HCT116 (cell line): ENCODE measurements at regions of chr1 and their contacts with region 1.

Region 1: DNA sequence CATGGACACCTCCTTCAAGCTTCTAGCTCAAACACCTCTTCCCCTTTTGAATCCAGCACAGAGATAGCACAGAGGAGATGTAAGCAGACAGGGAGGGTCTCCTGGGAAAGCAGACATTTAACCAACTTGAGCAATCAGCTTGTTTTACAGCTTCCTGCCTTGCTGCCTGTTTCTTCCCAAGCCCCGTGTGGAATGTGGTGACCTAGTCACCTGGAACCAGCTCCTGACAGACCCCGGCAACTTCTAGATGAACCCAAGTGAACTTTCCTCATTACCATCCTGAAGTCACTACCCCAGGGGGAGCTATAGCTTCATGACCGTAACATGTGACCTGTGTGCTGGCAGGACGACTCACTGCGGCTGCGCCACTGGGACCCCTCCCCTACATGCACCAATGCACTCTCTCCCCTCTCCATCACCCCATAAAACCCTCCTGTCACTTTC is 24.1 kb upstream of the TTF2 start:
- DNase-seq: no peak
- ATAC-seq: no peak
- H3K4me3 ChIP-seq: no peak overlapping the region
- H3K27ac ChIP-seq: no peak overlapping the region
- H3K4me1 ChIP-seq: no peaks in the 10 kb centered on the region
- H3K27me3 ChIP-seq: no peaks in the 10 kb centered on the region
- CTCF ChIP-seq: no peak
- POLR2A ChIP-seq: no peak
- RAD21 ChIP-seq: no peak

Region 2: GRCh38 chr1:116168277-116169097 is 867.6 kb before region 1 on chr1:
- CTCF ChIA-PET with region 1: no interaction called
- POLR2A ChIA-PET with region 1: no interaction called
- RAD21 ChIA-PET with region 1: no interaction called
- intact Hi-C with region 1: no loop called
- DNase-seq: no peak
- ATAC-seq: peak; percentile 95
- H3K4me3 ChIP-seq: peak overlapping the region in 1 of 2 experiments; percentile 23; a peak in 2 of 4 replicates
- H3K27ac ChIP-seq: no peak overlapping the region
- H3K4me1 ChIP-seq: peaks cover 0 to 6% of the 10 kb centered on the region in 2 experiments; a peak in 1 of 4 replicates
- H3K27me3 ChIP-seq: 0 out of 2 replicates have a peak, but pooled peaks cover 5% of the 10 kb centered on the region
- CTCF ChIP-seq: peak; percentile 21 to 69 (median 68); a peak in 4 of 6 replicates
- POLR2A ChIP-seq: no peak
- RAD21 ChIP-seq: no peak

Region 3: DNA sequence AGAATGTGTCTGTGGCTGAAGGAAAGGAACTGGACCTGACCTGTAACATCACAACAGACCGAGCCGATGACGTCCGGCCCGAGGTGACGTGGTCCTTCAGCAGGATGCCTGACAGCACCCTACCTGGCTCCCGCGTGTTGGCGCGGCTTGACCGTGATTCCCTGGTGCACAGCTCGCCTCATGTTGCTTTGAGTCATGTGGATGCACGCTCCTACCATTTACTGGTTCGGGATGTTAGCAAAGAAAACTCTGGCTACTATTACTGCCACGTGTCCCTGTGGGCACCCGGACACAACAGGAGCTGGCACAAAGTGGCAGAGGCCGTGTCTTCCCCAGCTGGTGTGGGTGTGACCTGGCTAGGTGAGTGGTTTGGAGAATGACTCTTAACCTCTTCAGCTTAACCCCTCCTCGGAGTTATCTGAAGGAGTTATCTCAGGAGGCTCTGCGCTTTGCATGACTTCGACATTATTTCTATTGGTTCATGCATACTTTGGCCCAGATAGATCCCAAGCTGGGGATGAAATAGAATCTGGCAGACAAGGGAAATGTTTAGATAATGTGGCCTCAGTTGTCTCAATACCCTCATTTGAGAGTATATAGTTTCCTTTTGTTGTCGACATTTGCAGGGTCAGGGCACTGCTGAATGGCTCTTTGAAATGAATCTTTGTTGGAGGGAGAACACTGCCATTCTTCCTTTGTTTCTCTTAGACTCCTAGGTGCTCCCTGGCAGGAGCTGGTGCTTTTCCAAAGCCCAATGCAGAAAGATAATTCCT is 86.6 kb before region 1 on chr1:
- CTCF ChIA-PET with region 1: no interaction called
- POLR2A ChIA-PET with region 1: no interaction called
- RAD21 ChIA-PET with region 1: no interaction called
- intact Hi-C with region 1: loop called (anchors 5 kb)
- DNase-seq: no peak
- ATAC-seq: no peak
- H3K4me3 ChIP-seq: no peak overlapping the region
- H3K27ac ChIP-seq: no peak overlapping the region
- H3K4me1 ChIP-seq: no peaks in the 10 kb centered on the region
- H3K27me3 ChIP-seq: no peaks in the 10 kb centered on the region
- CTCF ChIP-seq: no peak
- POLR2A ChIP-seq: no peak
- RAD21 ChIP-seq: no peak

Region 4: DNA sequence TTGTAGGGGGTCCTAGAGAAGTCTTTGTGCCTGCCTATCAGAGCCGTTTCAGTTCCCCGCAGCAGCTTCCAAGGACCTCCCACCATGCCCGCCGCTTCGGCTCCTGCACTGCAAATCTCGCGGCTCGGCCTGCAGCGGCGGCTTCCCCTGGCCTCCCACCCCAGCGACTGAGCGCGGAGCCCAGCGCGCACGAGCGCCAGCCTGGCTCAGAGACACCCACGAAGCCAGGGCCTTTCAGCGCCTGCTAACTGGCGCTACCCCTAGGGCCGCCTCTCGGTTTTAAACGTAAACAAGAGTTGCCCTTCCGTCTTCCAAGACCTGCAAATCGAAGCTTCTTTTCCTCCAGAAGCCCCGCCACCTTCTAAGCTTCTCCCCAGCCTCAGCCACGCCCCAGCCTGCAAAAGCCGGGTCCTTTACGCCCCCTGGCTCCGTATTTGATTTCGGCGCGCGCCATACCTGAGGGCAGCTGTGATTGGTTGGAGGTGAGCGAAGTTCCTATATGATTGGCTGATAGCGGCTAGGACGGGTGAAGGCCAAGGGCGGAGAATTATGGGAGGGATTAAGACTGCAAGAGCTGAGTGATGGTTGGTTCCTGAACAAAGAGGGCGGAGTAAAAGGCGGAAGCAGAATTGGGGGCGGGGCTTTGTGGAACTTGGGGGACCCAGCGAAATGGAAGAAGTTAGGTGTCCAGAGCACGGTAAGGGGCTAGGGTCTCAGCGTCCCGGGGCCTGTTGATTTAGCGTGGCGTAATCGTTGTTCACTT is 23.8 kb after region 1 on chr1 and contains the start of gene TTF2:
- CTCF ChIA-PET with region 1: no interaction called
- POLR2A ChIA-PET with region 1: no interaction called
- RAD21 ChIA-PET with region 1: no interaction called
- intact Hi-C with region 1: no loop called
- DNase-seq: peak; percentile 99
- ATAC-seq: peak; percentile 96
- H3K4me3 ChIP-seq: peak within 1 kb of the TSS; percentile 90 to 95
- H3K27ac ChIP-seq: peak within 1 kb of the TSS; percentile 85
- H3K4me1 ChIP-seq: peaks cover 4 to 15% of the 10 kb centered on the region in 2 experiments; a peak in 3 of 4 replicates
- H3K27me3 ChIP-seq: no peaks in the 10 kb centered on the region
- CTCF ChIP-seq: no peak
- POLR2A ChIP-seq: peak; percentile 62
- RAD21 ChIP-seq: no peak
- total RNA-seq, gene TTF2: 60.3 TPM